Activated CD4-positive, alpha-beta memory T cell treated with anti-CD3 and anti-CD28 coated beads for 36 hours (primary cell): ENCODE measurements at regions of chr15 and their contacts with region 1.

Region 1: GRCh38 chr15:76866716-76867321 is 38.3 kb downstream of the SCAPER start:
- DNase-seq: no peak
- H3K4me3 Mint-ChIP-seq: no peak overlapping the region
- H3K27ac Mint-ChIP-seq: no peak overlapping the region
- H3K4me1 Mint-ChIP-seq: peaks cover 34% of the 10 kb centered on the region
- H3K27me3 Mint-ChIP-seq: no peaks in the 10 kb centered on the region

Region 2: DNA sequence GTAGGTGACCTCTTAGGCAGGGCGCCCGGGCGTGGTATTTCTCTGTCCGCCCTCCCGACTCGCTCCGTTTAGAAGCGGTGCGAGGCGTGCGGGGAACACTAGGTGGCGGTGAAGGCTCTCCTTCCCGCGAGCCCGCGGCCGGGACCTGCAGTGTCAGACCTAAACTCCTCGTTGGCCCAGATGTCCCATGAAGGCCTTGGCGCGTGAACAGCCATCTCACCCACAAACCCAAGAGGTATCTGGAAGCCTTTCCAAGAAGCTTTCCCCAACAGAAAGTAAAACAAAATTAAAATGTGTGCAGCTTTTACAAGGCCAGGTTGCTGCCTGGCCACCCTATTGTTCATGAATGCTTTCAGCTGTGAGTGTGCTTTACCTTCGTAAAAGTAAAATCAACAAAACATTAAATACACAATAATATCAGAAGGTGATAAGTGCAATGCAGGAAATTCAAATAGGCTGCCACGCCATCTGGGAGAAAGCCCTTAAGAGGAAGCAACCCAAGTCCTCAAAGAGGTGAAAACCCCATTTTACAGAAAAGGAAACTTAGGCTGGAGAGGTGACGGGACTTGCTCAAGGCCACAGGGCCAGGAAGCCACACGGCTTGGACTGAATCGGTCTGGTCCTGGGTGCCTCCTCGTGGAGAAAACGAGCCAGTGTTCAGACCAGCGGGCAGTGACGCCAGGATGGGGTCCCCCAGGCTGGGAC is 675.8 kb before region 1 on chr15:
- CTCF ChIA-PET with region 1: interaction called, 8 read pairs
- POLR2A ChIA-PET with region 1: no interaction called
- intact Hi-C with region 1: loop called (anchors 1 kb)
- DNase-seq: peak; percentile 84
- H3K4me3 Mint-ChIP-seq: no peak overlapping the region
- H3K27ac Mint-ChIP-seq: no peak overlapping the region
- H3K4me1 Mint-ChIP-seq: peaks cover 13% of the 10 kb centered on the region
- H3K27me3 Mint-ChIP-seq: peaks cover 31% of the 10 kb centered on the region

Region 3: GRCh38 chr15:76576523-76577279 is 290.1 kb before region 1 on chr15:
- CTCF ChIA-PET with region 1: interaction called, 4 read pairs
- POLR2A ChIA-PET with region 1: interaction called, 3 read pairs
- intact Hi-C with region 1: loop called (anchors 5 kb)
- DNase-seq: peak; percentile 35
- H3K4me3 Mint-ChIP-seq: no peak overlapping the region
- H3K27ac Mint-ChIP-seq: no peak overlapping the region
- H3K4me1 Mint-ChIP-seq: peaks cover 26% of the 10 kb centered on the region
- H3K27me3 Mint-ChIP-seq: no peaks in the 10 kb centered on the region

Region 4: GRCh38 chr15:76648732-76649444 is 217.9 kb before region 1 on chr15:
- CTCF ChIA-PET with region 1: interaction called, 12 read pairs
- POLR2A ChIA-PET with region 1: no interaction called
- intact Hi-C with region 1: loop called (anchors 5 kb)
- DNase-seq: no peak
- H3K4me3 Mint-ChIP-seq: no peak overlapping the region
- H3K27ac Mint-ChIP-seq: no peak overlapping the region
- H3K4me1 Mint-ChIP-seq: peaks cover 6% of the 10 kb centered on the region
- H3K27me3 Mint-ChIP-seq: no peaks in the 10 kb centered on the region

Region 5: GRCh38 chr15:76931397-76932007 is 64.7 kb after region 1 on chr15 and contains the start of gene RCN2:
- CTCF ChIA-PET with region 1: no interaction called
- POLR2A ChIA-PET with region 1: no interaction called
- intact Hi-C with region 1: loop called (anchors 5 kb)
- DNase-seq: peak; percentile 96
- H3K4me3 Mint-ChIP-seq: peak within 1 kb of the TSS; percentile 88
- H3K27ac Mint-ChIP-seq: peak within 1 kb of the TSS; percentile 65
- H3K4me1 Mint-ChIP-seq: peaks cover 28% of the 10 kb centered on the region
- H3K27me3 Mint-ChIP-seq: no peaks in the 10 kb centered on the region
- total RNA-seq, gene RCN2: 27.0 to 27.6 TPM